ENCODE measurements at regions of chr2 and their contacts with region 1.

Region 1: GRCh38 chr2:24409700-24410556 is 49.6 kb upstream of the ITSN2 start:
- DNase-seq: peak in 8 of 9 experiments; percentile 2 to 79 (median 33)
- ATAC-seq: peak; percentile 71
- H3K4me3 ChIP-seq: no peak overlapping the region
- H3K4me3 Mint-ChIP-seq: no peak overlapping the region
- H3K27ac ChIP-seq: no peak overlapping the region
- H3K27ac Mint-ChIP-seq: no peak overlapping the region
- H3K4me1 ChIP-seq: no peaks in the 10 kb centered on the region
- H3K4me1 Mint-ChIP-seq: no peaks in the 10 kb centered on the region
- H3K27me3 ChIP-seq: peaks cover 0 to 5% of the 10 kb centered on the region in 2 experiments
- H3K27me3 Mint-ChIP-seq: peaks cover 12% of the 10 kb centered on the region
- CTCF ChIP-seq: peak; percentile 88

Region 2: DNA sequence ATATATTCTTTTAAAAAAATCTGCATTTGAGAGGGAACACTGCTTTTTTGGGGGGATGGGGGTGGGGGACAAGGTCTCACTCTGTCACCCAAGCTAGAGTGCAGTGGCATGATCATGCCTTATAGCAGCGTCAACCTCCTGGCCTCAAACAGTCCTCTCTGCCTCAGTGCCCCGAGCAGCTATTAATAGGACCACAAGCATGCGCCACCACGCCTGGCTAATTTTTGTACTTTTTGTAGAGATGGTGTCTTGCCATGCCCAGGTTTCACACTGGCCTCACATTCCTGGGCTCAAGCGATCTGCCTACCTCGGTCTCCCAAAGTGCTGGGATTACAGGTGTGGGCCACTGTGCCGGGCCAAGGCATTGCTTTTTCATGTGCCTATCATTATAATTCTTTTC is 637.2 kb before region 1 on chr2:
- CTCF ChIA-PET with region 1: no interaction called
- POLR2A ChIA-PET with region 1: no interaction called
- intact Hi-C with region 1: no loop called
- DNase-seq: no peak
- ATAC-seq: no peak
- H3K4me3 ChIP-seq: no peak overlapping the region
- H3K4me3 Mint-ChIP-seq: no peak overlapping the region
- H3K27ac ChIP-seq: no peak overlapping the region
- H3K27ac Mint-ChIP-seq: no peak overlapping the region
- H3K4me1 ChIP-seq: no peaks in the 10 kb centered on the region
- H3K4me1 Mint-ChIP-seq: no peaks in the 10 kb centered on the region
- H3K27me3 ChIP-seq: no peaks in the 10 kb centered on the region
- H3K27me3 Mint-ChIP-seq: no peaks in the 10 kb centered on the region
- CTCF ChIP-seq: no peak

Region 3: GRCh38 chr2:24209389-24210105 is 200.4 kb before region 1 on chr2:
- CTCF ChIA-PET with region 1: no interaction called
- POLR2A ChIA-PET with region 1: no interaction called
- intact Hi-C with region 1: no loop called
- DNase-seq: no peak
- ATAC-seq: no peak
- H3K4me3 ChIP-seq: no peak overlapping the region
- H3K4me3 Mint-ChIP-seq: no peak overlapping the region
- H3K27ac ChIP-seq: no peak overlapping the region
- H3K27ac Mint-ChIP-seq: no peak overlapping the region
- H3K4me1 ChIP-seq: no peaks in the 10 kb centered on the region
- H3K4me1 Mint-ChIP-seq: no peaks in the 10 kb centered on the region
- H3K27me3 ChIP-seq: no peaks in the 10 kb centered on the region
- H3K27me3 Mint-ChIP-seq: no peaks in the 10 kb centered on the region
- CTCF ChIP-seq: no peak

Region 4: GRCh38 chr2:24315669-24316068 is 94.3 kb before region 1 on chr2:
- CTCF ChIA-PET with region 1: no interaction called
- POLR2A ChIA-PET with region 1: no interaction called
- intact Hi-C with region 1: no loop called
- DNase-seq: no peak
- ATAC-seq: no peak
- H3K4me3 ChIP-seq: no peak overlapping the region
- H3K4me3 Mint-ChIP-seq: no peak overlapping the region
- H3K27ac ChIP-seq: no peak overlapping the region
- H3K27ac Mint-ChIP-seq: peak overlapping the region; percentile 30
- H3K4me1 ChIP-seq: no peaks in the 10 kb centered on the region
- H3K4me1 Mint-ChIP-seq: peaks cover 33% of the 10 kb centered on the region
- H3K27me3 ChIP-seq: no peaks in the 10 kb centered on the region
- H3K27me3 Mint-ChIP-seq: no peaks in the 10 kb centered on the region
- CTCF ChIP-seq: no peak

Region 5: DNA sequence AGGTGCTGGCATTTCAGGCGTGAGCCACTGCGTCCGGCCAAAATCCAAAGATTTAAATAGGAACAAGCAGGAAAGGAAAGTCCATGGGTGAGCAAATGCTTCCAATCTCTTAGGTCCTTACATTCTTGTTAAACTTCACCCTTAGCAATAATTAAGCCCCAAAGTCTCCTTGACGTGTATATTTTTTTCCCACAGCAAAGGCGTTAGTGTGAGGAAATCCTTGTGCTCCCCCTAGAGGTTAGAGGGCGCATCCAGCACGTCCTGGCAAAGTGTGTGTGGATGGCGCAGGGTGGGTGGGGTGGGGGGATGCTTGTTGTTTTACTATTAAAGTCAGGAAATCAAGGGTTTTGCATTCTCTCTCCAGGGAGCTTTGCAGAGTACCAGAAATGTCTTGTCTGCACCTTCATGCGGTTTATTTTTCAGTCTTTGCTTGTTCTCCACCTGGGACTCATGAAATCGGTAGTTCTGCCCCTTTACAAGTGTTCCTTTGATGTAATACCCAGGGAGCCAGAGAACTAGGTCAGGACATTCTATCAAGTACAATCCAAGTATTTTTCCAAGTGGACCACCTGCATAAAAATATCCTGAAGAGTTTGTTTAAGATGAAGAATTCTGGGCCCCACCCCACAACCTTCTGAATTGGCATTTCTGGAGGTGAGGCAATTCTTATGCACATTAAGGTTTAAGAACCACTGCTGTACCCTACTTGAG is 27.4 kb before region 1 on chr2:
- CTCF ChIA-PET with region 1: no interaction called
- POLR2A ChIA-PET with region 1: no interaction called
- intact Hi-C with region 1: no loop called
- DNase-seq: peak; percentile 23 to 82 (median 52)
- ATAC-seq: peak; percentile 73
- H3K4me3 ChIP-seq: no peak overlapping the region
- H3K4me3 Mint-ChIP-seq: no peak overlapping the region
- H3K27ac ChIP-seq: no peak overlapping the region
- H3K27ac Mint-ChIP-seq: no peak overlapping the region
- H3K4me1 ChIP-seq: no peaks in the 10 kb centered on the region
- H3K4me1 Mint-ChIP-seq: no peaks in the 10 kb centered on the region
- H3K27me3 ChIP-seq: no peaks in the 10 kb centered on the region
- H3K27me3 Mint-ChIP-seq: no peaks in the 10 kb centered on the region
- CTCF ChIP-seq: peak; percentile 57

Region 6: GRCh38 chr2:24429197-24430074 is 19.5 kb after region 1 on chr2:
- CTCF ChIA-PET with region 1: interaction called, 10 read pairs
- POLR2A ChIA-PET with region 1: no interaction called
- intact Hi-C with region 1: no loop called
- DNase-seq: no peak
- ATAC-seq: no peak
- H3K4me3 ChIP-seq: no peak overlapping the region
- H3K4me3 Mint-ChIP-seq: no peak overlapping the region
- H3K27ac ChIP-seq: no peak overlapping the region
- H3K27ac Mint-ChIP-seq: no peak overlapping the region
- H3K4me1 ChIP-seq: no peaks in the 10 kb centered on the region
- H3K4me1 Mint-ChIP-seq: no peaks in the 10 kb centered on the region
- H3K27me3 ChIP-seq: no peaks in the 10 kb centered on the region
- H3K27me3 Mint-ChIP-seq: no peaks in the 10 kb centered on the region
- CTCF ChIP-seq: no peak

Region 7: DNA sequence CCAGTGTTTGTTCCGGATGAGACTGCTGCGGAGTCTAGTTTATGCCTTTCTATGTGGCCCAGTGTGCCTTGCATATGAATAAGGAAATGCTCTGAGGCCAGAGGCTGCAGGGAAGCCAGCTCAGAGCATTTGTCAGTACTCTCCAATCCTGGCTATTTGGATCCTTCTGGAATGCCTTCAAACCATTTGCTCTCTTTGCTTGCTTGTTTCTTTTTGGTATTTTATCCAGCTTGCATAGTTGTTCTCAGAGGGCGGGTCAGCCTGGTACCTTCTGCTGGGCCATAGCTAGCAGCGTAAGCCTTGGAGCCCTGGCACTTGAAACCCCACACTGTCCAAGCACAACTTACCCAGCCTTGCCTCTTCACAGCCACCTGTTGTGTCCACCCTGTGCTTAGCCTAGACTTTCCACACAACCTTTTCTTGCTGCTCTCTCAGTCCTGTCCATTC is 403.8 kb after region 1 on chr2:
- CTCF ChIA-PET with region 1: interaction called, 209 read pairs
- POLR2A ChIA-PET with region 1: no interaction called
- intact Hi-C with region 1: no loop called
- DNase-seq: no peak
- ATAC-seq: no peak
- H3K4me3 ChIP-seq: no peak overlapping the region
- H3K4me3 Mint-ChIP-seq: no peak overlapping the region
- H3K27ac ChIP-seq: no peak overlapping the region
- H3K27ac Mint-ChIP-seq: no peak overlapping the region
- H3K4me1 ChIP-seq: no peaks in the 10 kb centered on the region
- H3K4me1 Mint-ChIP-seq: peaks cover 4% of the 10 kb centered on the region
- H3K27me3 ChIP-seq: no peaks in the 10 kb centered on the region
- H3K27me3 Mint-ChIP-seq: no peaks in the 10 kb centered on the region
- CTCF ChIP-seq: no peak

Region 8: GRCh38 chr2:24832931-24833701 is 423.2 kb after region 1 on chr2:
- CTCF ChIA-PET with region 1: interaction called, 209 read pairs
- POLR2A ChIA-PET with region 1: no interaction called
- intact Hi-C with region 1: no loop called
- DNase-seq: no peak
- ATAC-seq: no peak
- H3K4me3 ChIP-seq: no peak overlapping the region
- H3K4me3 Mint-ChIP-seq: no peak overlapping the region
- H3K27ac ChIP-seq: no peak overlapping the region
- H3K27ac Mint-ChIP-seq: no peak overlapping the region
- H3K4me1 ChIP-seq: no peaks in the 10 kb centered on the region
- H3K4me1 Mint-ChIP-seq: no peaks in the 10 kb centered on the region
- H3K27me3 ChIP-seq: no peaks in the 10 kb centered on the region
- H3K27me3 Mint-ChIP-seq: no peaks in the 10 kb centered on the region
- CTCF ChIP-seq: no peak

Measured in CD8-positive, alpha-beta T cell (primary cell).